Activated CD4-positive, alpha-beta T cell treated with anti-CD3 and anti-CD28 coated beads, Interleukin-2, amount 10 ng/mL, durations not matched to agents 24 days and 14 days (primary cell): ENCODE measurements at regions of chr3 and their contacts with region 1.

Region 1: DNA sequence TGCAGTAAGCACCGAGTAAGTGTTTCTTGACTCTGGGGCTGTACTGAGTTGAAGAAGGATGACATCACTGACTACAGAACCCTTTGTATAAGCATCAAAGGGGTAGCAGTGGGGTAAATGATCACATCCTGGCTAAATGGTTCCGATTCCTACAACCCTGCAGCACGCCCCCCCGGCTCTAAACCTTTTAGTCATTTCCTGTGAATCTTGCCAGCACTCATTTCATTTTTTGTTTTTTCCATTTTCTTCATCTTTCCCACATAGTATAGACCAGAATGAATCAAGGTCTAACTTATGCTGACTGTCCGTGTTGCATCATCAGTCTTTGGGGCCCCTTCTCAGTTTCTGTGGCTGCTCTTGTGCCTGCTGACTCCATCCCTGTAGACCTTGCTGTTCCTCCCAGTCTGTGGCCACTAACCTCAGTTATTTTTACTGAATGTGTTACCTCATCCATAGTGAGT is 383.1 kb upstream of the TPRG1 start:
- DNase-seq: peak; percentile 85
- H3K4me3 Mint-ChIP-seq: no peak overlapping the region
- H3K27ac Mint-ChIP-seq: no peak overlapping the region
- H3K4me1 Mint-ChIP-seq: peaks cover 2% of the 10 kb centered on the region
- H3K27me3 Mint-ChIP-seq: no peaks in the 10 kb centered on the region

Region 2: DNA sequence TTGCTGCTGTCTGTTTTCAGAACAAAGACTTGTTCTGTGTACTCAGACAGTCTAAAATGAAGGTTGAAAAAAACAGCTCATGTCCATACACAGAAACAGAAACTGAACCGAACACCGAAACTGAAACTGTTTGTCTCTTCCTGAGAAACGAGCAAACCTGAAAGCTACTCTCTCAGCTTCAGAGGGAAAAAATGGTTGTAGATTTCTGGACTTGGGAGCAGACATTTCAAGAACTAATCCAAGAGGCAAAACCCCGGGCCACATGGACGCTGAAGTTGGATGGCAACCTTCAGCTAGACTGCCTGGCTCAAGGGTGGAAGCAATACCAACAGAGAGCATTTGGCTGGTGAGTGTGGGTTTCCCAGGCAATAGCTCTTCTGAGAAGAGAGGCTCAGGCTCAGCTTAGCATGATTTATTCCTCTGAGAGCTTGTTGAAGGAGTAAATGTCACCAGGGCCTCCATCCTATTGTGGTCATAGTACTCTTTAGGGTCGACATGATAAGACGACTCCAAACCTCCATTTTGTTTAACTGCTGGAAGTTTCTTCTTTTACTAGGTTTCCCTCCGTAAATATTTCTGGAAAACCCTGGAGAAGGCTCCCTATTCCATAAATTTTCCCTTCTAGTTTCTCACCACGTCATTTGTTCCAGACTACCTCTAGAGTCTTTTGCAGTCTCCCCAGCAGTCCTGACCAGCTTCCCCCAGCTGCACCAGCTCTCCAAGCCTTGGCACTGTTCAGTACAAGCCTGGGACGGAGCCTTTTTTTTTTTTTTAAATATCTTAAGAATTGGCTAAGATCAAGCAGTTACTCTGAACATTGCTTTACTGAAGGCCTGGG is 1420.2 kb before region 1 on chr3 and contains the start of gene RTP4:
- intact Hi-C with region 1: loop called (anchors 2 kb)
- DNase-seq: peak; percentile 89
- H3K4me3 Mint-ChIP-seq: peak within 1 kb of the TSS; percentile 90
- H3K27ac Mint-ChIP-seq: peak within 1 kb of the TSS; percentile 94
- H3K4me1 Mint-ChIP-seq: peaks cover 31% of the 10 kb centered on the region
- H3K27me3 Mint-ChIP-seq: no peaks in the 10 kb centered on the region
- total RNA-seq, gene RTP4: 3.0 and 3.4 TPM in 2 replicates

Region 3: DNA sequence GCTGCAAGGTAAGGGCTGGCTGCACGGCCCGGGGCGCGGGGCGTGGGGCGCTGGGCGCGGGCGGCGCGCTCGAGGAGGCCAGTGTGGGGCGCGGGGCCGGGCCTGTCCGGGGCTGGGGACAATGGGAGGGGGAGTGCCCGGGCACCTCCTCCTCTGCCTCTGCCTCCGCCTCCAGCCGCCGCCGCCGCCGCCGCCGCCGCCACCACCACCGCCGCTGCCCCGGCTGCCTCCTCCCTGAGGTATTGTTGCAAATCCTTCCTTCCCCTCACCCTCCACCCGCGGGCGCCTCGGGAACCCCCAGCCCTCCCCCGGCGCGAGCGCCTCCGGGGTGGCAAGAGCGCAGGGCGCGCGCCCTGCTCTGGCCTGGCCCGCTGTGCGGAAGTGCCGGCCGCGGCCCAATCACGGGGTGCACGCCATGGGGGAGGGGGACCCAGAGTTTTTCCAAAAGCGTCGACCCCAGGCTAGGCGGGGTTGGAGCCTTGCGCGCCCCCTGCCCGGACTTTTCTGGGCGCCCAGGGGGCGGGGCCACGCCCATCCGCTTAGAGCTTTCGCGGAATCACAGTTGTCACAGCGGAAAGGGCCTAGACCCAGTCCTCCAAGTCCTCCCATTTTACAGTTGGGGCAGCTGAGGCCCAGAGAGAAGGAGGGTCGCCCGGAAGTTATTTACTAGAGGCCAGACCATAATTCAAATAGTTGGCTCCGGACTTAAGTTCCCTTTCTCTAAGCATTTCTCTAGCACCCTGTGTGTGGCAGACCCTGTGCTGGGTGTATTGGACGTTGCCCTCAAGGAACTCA is 634.4 kb before region 1 on chr3 and contains the start of gene LPP:
- intact Hi-C with region 1: loop called (anchors 5 kb)
- DNase-seq: peak; percentile 97
- H3K4me3 Mint-ChIP-seq: peak within 1 kb of the TSS; percentile 86
- H3K27ac Mint-ChIP-seq: peak within 1 kb of the TSS; percentile 90
- H3K4me1 Mint-ChIP-seq: peaks cover 58% of the 10 kb centered on the region
- H3K27me3 Mint-ChIP-seq: no peaks in the 10 kb centered on the region
- total RNA-seq, gene LPP: 39.5 and 41.4 TPM in 2 replicates

Region 4: DNA sequence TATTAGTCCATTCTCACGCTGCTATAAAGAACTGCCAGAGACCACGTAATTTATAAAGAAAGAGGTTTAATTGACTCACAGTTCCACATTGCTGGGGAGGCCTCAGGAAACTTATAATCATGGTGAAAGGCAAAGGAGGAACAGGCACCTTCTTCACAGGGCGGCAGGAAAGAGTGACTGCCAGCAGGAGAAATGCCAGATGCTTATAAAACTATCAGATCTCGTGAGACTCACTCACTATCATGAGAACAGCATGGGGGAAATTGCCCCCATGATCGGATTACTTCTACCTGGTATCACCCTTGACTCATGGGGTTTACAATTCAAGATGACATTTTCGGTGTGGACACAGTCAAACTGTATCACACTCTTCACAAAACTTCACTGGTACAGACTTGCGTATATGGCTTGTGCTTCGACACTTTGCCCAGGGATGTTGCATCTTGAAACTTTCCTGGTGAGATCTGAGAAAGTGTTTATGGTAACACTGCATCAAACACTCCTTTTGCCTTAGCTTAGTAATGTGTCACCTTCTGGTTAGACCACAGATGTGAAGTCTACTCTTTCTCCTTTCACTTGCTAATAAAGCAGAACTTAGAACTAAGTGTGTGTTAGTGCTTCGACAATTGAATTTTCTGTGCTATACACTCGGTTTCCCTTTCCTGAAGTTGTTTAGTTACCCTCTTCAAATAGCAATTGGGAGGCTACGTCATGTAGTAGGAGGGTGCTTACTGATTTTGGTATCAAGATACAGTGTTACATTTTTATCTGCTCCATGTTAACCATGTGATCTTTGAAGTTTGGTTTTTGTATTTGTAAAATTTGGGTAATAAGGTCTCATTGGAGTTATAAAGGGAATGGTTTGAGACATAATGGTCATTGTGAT is 449.0 kb before region 1 on chr3:
- intact Hi-C with region 1: loop called (anchors 5 kb)
- DNase-seq: peak; percentile 81
- H3K4me3 Mint-ChIP-seq: peak overlapping the region; percentile 66
- H3K27ac Mint-ChIP-seq: peak overlapping the region; percentile 93
- H3K4me1 Mint-ChIP-seq: peaks cover 34% of the 10 kb centered on the region
- H3K27me3 Mint-ChIP-seq: peaks cover 6% of the 10 kb centered on the region

Region 5: GRCh38 chr3:188697127-188697526 is 91.5 kb before region 1 on chr3:
- intact Hi-C with region 1: loop called (anchors 1 kb)
- DNase-seq: no peak
- H3K4me3 Mint-ChIP-seq: no peak overlapping the region
- H3K27ac Mint-ChIP-seq: peak overlapping the region; percentile 12
- H3K4me1 Mint-ChIP-seq: peaks cover 24% of the 10 kb centered on the region
- H3K27me3 Mint-ChIP-seq: peaks cover 3% of the 10 kb centered on the region

Region 6: DNA sequence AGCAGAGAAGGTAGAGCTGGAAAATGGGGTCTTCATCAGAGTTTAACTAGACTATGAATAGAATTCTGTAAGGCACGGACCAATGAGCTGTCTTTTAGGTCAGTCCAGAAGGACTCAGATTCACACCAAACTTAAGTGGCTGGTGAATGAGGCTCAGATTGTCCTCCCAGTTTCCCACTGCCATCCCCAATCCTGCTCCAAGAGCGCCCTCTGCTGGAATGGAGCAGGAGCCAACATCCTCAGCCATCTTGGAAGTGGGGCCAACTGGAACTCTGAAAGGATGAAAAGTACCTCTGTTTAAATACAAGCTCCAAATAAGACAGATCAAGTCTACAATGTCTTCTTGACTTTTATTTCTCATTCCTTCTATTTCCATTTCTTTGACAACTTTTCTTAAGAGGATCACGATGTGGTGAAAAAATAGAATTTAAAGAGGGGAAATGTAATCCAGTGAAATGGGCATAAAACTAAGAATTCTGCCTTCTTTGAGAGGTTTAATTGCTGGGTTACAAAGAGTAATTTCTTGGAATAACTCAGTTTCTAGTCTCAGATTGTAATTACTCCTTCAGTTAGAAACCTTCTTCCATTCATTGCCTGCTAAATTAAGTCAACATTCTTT is 166.0 kb after region 1 on chr3:
- intact Hi-C with region 1: loop called (anchors 2 kb)
- DNase-seq: peak; percentile 94
- H3K4me3 Mint-ChIP-seq: no peak overlapping the region
- H3K27ac Mint-ChIP-seq: peak overlapping the region; percentile 10
- H3K4me1 Mint-ChIP-seq: peaks cover 27% of the 10 kb centered on the region
- H3K27me3 Mint-ChIP-seq: peaks cover 6% of the 10 kb centered on the region